ENCODE measurements at regions of chr13 and their contacts with region 1.

Region 1: GRCh38 chr13:113393563-113394338 is 29.8 kb upstream of the GRTP1 start:
- DNase-seq: peak; percentile 92
- ATAC-seq: peak; percentile 91

Region 2: DNA sequence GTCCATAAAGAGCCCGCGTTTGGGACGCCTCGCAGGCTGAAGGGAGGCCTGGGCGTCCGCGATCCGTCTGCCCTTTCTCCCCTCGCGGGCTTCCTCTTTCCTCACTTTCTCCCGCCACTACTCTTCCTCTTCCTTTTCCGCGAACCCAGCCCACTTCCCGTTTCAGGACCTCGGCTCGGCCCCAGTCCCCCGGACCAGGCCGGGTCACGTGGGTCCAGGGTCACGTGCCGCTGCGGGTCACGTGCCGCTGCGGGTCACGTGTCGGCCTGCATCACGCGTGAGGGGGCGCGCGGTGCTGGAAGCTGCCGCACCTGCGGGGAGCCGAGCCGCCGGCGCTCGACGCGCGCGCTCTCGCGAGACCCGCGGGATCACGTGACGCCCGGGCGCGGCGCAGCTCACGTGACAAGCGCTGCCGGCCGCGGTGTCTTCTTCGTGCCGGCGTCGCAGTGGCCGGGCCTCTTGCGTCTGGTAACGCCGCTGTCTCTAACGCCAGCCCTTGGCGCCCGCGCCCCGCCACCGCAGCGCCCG is 96.8 kb before region 1 on chr13 and contains the start of gene LAMP1:
- intact Hi-C with region 1: loop called (anchors 10 kb)
- DNase-seq: peak; percentile 99
- ATAC-seq: peak; percentile 96
- total RNA-seq, gene LAMP1: 89.6 TPM